PC-9 (cell line): ENCODE measurements at regions of chr2 and their contacts with region 1.

Region 1: GRCh38 chr2:101831351-101831865 is 133.9 kb downstream of the MAP4K4 start:
- DNase-seq: peak; percentile 49 to 55
- H3K4me3 ChIP-seq: no peak overlapping the region
- H3K27ac ChIP-seq: peak overlapping the region; percentile 41
- H3K4me1 ChIP-seq: peaks cover 54% of the 10 kb centered on the region
- H3K27me3 ChIP-seq: no peaks in the 10 kb centered on the region
- CTCF ChIP-seq: peak; percentile 76

Region 2: DNA sequence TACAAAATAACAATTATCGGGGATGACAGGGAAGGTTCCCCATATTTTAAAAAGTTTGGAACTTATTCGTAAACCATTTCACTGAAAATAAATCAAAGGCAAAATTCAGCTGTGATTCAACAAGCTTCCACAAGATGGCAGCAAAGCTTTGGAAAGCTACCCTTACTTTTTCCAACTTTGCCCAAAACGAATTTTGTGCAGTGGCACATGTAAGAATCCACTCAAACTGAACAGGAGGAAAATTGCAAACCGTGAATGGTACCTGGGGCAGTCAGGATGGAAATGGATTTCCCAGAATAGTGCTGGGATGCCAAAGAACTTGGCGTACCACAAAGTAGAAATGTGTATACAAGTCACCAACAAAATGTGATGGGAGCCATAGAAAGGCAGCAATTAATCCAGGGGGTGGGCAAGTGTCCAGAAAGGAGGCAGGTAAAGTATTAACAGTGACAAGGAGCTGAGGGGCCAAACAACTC is 818.7 kb before region 1 on chr2:
- CTCF ChIA-PET with region 1: no interaction called
- POLR2A ChIA-PET with region 1: no interaction called
- intact Hi-C with region 1: loop called (anchors 10 kb)
- DNase-seq: peak; percentile 19 to 39
- H3K4me3 ChIP-seq: no peak overlapping the region
- H3K27ac ChIP-seq: no peak overlapping the region; the same call in 1 of the 2 replicates
- H3K4me1 ChIP-seq: no peaks in the 10 kb centered on the region
- H3K27me3 ChIP-seq: no peaks in the 10 kb centered on the region
- CTCF ChIP-seq: peak; percentile 91

Region 3: DNA sequence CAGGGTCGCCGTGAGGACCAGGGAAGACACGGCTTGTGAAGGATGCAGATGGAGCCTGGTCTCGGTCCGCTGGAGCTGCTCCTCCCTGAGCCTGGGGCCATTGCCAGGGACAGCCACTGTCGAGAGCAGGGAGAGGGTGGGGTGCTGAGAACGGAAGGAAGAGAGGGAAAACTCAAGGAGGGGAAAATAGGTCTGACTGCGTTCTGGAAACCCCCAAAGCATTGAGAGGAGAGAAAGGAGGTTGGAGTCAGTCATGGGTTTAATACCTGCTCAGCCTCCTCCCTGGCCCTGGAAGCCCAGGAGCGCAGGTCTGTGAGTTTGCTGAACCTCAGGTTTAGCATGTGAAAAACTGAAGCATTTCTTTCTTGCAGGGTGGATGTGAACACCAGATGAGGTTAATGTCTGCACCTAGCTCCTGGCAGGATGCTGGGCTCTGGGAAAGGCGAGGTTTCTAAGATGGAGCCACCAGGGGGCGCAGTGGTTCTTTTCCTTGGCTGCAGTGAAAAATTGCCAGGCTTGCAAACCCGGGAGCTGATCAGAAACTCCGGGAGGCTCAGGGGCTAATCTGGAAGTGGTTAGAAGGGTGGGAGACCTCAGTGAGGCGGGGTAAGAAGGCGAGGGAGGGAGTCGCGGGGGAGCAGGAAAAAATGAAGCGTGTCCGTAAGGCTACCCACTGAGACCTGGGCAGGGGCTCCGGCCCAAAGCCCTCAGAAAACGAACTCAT is 489.3 kb before region 1 on chr2:
- CTCF ChIA-PET with region 1: interaction called, 8 read pairs
- POLR2A ChIA-PET with region 1: no interaction called
- intact Hi-C with region 1: loop called (anchors 2 kb)
- DNase-seq: peak in 1 of 2 experiments; percentile 71
- H3K4me3 ChIP-seq: no peak overlapping the region
- H3K27ac ChIP-seq: no peak overlapping the region
- H3K4me1 ChIP-seq: peaks cover 39% of the 10 kb centered on the region
- H3K27me3 ChIP-seq: no peaks in the 10 kb centered on the region
- CTCF ChIP-seq: peak; percentile 94

Region 4: DNA sequence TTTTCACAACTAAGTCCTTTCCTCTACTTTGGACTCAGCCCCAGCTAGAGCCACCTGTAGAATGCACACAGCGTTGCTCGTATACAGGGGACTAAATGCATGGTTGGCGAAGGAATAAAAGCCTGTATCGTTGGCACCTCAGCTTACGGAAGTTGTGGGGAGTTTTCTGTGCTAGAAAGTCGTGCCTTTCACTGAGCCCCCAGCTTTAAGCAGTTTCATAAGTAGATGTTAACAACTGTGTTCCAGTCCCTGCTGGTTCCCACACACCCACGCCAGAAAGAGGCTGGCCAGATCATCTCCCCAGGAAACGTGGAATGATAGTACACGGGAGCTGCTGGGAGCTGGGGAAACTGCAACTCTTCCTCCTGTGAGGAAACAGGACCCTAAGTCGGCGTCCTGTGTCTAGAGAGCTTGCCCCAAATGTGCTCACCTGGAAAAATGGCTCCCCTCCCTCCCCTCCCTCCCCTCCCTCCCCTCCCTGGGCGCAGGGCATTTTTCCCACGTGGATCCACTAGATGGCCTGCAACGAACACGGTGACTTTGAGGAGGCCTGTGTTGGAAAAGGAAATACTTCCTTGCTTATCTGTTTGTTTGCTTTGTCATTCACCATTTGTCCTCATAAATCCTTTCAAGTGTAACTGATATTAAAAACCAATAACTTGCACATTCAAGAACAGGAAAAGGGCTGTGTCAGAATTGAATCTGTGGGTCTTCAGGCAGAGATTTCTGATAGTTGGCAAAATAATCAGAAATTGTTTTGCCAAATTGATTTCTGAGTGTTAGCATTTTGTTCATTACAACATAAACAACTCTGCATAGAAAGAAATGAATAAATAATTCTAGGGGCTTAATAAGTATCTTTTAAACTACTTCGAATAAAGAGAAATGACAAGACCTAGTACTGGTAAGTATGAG is 312.6 kb before region 1 on chr2:
- CTCF ChIA-PET with region 1: interaction called, 3 read pairs
- POLR2A ChIA-PET with region 1: no interaction called
- intact Hi-C with region 1: loop called (anchors 1 kb)
- DNase-seq: peak; percentile 52 to 95
- H3K4me3 ChIP-seq: peak overlapping the region; percentile 14; the same call in 1 of the 2 replicates
- H3K27ac ChIP-seq: peak overlapping the region; percentile 98
- H3K4me1 ChIP-seq: peaks cover 55% of the 10 kb centered on the region
- H3K27me3 ChIP-seq: no peaks in the 10 kb centered on the region
- CTCF ChIP-seq: peak; percentile 55; the same call in 1 of the 2 replicates

Region 5: DNA sequence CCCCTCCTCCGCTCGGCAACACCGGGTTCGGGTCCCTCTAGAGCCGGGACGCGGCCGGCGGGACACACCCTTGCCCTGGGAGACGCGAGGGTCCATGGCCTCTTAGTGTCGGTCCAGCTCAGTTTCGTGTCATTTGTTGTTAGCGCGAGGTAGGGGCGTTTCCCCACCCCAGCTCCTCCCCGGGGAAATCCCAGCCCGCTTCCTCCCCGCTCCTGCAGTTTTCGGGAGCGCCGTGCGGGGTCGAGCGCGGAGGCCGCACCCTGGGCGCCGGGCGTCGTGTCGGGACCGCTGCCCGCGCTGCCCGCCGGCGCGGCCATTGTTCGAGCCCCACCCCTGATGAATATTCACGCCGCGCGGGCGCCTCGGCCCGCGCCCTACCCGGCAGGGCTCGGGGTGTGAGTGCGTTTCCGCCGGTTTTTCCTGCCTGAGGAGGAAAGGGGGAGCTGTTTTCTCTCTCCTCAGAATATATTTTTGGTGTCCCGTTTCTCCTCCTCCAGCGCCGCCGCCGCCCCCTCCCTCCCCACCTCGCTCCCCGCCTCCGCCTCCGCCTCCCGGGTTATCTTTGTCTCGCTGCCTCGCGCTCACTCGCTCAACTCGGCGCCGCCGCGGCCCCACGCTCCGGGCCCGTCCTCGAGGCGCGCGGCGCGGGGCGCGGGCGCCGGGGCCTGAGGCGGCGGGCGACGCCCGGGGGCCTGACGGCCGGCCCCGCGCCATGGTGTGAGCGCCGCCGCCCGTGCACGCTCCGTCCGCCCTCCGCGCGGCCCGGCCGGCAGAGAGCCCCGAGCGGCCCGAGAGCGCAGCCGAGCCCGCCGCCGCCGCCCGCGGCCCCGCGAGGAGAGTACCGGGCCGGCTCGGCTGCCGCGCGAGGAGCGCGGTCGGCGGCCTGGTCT is 134.0 kb before region 1 on chr2 and contains the start of gene MAP4K4:
- CTCF ChIA-PET with region 1: interaction called, 4 read pairs
- POLR2A ChIA-PET with region 1: interaction called, 3 read pairs
- intact Hi-C with region 1: loop called (anchors 1 kb)
- DNase-seq: peak; percentile 59 to 74
- H3K4me3 ChIP-seq: peak within 1 kb of the TSS; percentile 96
- H3K27ac ChIP-seq: peak within 1 kb of the TSS; percentile 59
- H3K4me1 ChIP-seq: peaks cover 21% of the 10 kb centered on the region
- H3K27me3 ChIP-seq: no peaks in the 10 kb centered on the region
- CTCF ChIP-seq: peak; percentile 24; the same call in 1 of the 2 replicates
- total RNA-seq, gene MAP4K4: 100 and 129 TPM in 2 replicates

Region 6: GRCh38 chr2:101766871-101767739 is 64.3 kb before region 1 on chr2:
- CTCF ChIA-PET with region 1: interaction called, 4 read pairs
- POLR2A ChIA-PET with region 1: interaction called, 4 read pairs
- intact Hi-C with region 1: loop called (anchors 2 kb)
- DNase-seq: peak; percentile 60 to 89
- H3K4me3 ChIP-seq: no peak overlapping the region
- H3K27ac ChIP-seq: peak overlapping the region; percentile 73
- H3K4me1 ChIP-seq: peaks cover 73% of the 10 kb centered on the region
- H3K27me3 ChIP-seq: no peaks in the 10 kb centered on the region
- CTCF ChIP-seq: no peak